ENCODE measurements at regions of chr17 and their contacts with region 1.

Region 1: DNA sequence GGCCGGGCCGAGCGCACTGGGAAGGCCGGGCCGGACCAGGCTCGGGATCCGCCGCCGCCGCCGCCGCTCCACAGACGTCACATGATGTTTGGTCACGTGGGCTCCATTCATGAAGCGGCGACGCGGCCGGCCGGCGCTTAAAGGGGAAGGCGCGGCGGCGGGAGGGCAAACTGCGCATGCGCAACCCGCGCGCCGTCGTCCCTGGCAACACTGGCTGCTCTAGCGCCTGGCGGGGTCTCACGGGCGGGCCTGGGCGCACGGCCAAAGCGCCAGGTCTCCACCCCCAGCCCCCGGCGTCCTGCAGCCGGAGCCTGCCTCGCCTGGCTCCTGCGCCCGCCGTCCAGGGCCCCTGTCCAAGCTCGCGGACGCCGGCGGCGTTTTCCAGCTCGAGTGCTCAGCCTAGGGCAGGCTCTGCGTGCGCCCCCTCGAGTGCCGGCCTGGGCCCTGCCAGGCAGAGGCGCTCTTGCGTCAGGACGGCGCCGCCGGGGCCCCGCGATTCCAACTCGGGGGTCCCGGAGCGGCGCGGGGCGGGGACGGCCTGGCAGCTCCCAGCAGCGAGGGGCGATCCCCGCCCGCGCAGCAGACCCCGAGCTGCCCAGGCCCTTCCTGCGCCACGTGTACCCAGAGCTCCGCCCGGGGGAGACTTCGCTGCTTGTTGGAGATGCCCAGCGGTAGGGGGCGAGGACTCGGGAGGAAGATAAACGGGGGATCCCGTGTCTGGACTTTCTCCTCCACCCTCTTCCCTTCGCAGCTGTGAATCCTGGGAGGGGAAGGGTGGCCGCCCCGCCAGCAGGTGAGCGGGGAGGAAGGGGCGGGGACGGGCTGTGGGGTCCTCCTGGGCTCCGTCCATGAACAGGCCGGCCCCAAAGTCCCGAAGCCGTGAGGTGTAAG is at the start of gene MAFG:
- DNase-seq: peak; percentile 88
- H3K4me3 Mint-ChIP-seq: peak within 1 kb of the TSS; percentile 76
- H3K27ac Mint-ChIP-seq: peak within 1 kb of the TSS; percentile 86
- H3K4me1 Mint-ChIP-seq: peaks cover 26% of the 10 kb centered on the region
- H3K27me3 Mint-ChIP-seq: peaks cover 5% of the 10 kb centered on the region
- total RNA-seq, gene MAFG: 13.5 to 14.8 TPM

Region 2: DNA sequence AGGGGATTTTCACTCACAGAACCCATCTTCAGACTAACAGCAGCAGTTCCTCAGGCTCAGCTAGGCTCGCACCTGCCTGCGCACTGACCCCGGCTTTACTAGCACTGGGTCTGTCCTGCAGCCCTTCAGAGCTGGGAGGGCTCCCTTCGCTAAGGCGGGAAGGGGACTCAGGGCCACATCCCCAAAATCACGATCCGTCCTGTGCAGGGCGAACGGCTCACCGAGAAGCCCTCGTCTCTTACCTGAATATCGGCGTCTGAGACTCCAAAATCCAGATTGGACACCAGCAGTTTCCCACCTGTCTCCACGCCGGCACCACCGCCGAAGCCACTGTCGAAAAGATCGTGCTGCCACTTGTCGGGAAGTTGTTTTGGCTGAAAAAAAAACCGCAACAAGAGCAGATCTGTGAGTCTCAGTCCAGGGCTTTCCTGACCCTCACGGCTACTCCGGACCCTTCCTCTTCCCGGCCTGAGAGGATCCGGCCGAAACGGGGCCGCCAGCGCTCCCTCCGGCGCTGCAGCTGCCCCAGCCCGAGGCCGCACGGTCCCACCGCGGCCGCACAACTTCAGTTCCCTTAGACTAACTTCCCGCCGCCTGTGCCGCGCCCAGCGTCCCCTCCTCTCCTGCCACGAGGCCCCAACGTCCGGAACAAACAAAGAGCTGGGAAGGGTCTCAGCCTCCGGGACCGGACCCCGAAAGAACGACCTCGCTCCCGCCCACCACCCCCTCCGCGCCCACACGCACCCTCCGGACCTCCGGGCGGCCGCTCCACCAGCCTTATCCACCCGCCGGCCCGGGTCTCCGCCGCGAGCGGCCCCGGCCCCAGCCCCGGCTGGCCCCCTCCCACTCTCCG is 37.2 kb before region 1 on chr17:
- CTCF ChIA-PET with region 1: interaction called, 3 read pairs
- intact Hi-C with region 1: loop called (anchors 2 kb)
- DNase-seq: peak; percentile 43
- H3K4me3 Mint-ChIP-seq: peak overlapping the region; percentile 85
- H3K27ac Mint-ChIP-seq: peak overlapping the region; percentile 93
- H3K4me1 Mint-ChIP-seq: peaks cover 33% of the 10 kb centered on the region
- H3K27me3 Mint-ChIP-seq: no peaks in the 10 kb centered on the region

Region 3: GRCh38 chr17:81917565-81918332 is 10.1 kb before region 1 on chr17 and contains the start of gene SIRT7:
- CTCF ChIA-PET with region 1: interaction called, 7 read pairs
- intact Hi-C with region 1: loop called (anchors 1 kb)
- DNase-seq: peak; percentile 82
- H3K4me3 Mint-ChIP-seq: peak within 1 kb of the TSS; percentile 90
- H3K27ac Mint-ChIP-seq: peak within 1 kb of the TSS; percentile 41
- H3K4me1 Mint-ChIP-seq: peaks cover 31% of the 10 kb centered on the region
- H3K27me3 Mint-ChIP-seq: no peaks in the 10 kb centered on the region
- total RNA-seq, gene SIRT7: 18.8 to 22.1 TPM

Region 4: DNA sequence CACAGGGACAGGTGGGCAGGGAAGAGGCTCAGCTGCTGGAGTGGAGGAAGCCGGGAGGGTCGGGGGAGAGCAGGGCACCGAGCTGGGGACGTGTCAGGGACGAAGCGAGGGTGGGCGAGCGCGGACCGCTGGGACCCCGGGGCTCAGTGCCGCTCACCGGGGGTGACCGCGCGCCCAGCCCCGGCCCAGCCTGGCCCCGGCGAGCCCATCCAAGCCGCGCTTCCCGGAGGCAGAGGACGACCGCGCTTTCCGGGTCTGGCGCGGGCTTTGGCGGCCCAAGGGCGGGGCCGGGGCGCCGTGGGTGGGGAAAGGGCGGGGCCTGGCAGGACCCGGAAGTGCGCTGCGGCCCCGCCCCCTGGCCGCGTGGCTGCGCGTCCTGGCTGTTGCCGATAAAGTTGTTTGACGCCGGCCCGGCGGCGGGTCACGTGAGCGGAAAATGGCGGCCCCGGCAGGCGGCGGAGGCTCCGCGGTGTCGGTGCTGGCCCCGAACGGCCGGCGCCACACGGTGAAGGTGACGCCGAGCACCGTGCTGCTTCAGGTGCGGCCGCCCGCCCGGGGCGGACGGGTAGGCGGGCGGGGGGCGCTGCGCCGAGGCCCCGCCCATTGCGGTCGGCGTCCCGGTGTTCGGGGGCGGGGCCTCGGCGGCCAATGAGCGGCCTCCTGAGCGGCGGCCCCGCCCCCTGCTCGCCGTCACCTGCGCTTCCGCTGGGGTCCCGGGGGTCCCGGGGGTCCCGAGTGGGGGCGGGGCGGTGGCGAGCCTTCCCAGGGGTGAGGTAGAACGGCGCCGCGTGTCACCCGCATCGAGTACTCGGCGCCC is 49.5 kb after region 1 on chr17 and contains the start of gene ASPSCR1:
- CTCF ChIA-PET with region 1: no interaction called
- intact Hi-C with region 1: loop called (anchors 2 kb)
- DNase-seq: peak; percentile 89
- H3K4me3 Mint-ChIP-seq: peak within 1 kb of the TSS; percentile 98
- H3K27ac Mint-ChIP-seq: peak within 1 kb of the TSS; percentile 97
- H3K4me1 Mint-ChIP-seq: peaks cover 37% of the 10 kb centered on the region
- H3K27me3 Mint-ChIP-seq: no peaks in the 10 kb centered on the region
- total RNA-seq, gene ASPSCR1: 33.6 to 34.8 TPM

Region 5: GRCh38 chr17:82212331-82213250 is 284.7 kb after region 1 on chr17 and contains the start of gene CCDC57:
- CTCF ChIA-PET with region 1: no interaction called
- intact Hi-C with region 1: loop called (anchors 1 kb)
- DNase-seq: peak; percentile 74
- H3K4me3 Mint-ChIP-seq: peak within 1 kb of the TSS; percentile 79
- H3K27ac Mint-ChIP-seq: peak within 1 kb of the TSS; percentile 53
- H3K4me1 Mint-ChIP-seq: peaks cover 33% of the 10 kb centered on the region
- H3K27me3 Mint-ChIP-seq: no peaks in the 10 kb centered on the region
- total RNA-seq, gene CCDC57: 40.7 to 43.9 TPM